ENCODE measurements at regions of chr2 and their contacts with region 1.

Region 1: DNA sequence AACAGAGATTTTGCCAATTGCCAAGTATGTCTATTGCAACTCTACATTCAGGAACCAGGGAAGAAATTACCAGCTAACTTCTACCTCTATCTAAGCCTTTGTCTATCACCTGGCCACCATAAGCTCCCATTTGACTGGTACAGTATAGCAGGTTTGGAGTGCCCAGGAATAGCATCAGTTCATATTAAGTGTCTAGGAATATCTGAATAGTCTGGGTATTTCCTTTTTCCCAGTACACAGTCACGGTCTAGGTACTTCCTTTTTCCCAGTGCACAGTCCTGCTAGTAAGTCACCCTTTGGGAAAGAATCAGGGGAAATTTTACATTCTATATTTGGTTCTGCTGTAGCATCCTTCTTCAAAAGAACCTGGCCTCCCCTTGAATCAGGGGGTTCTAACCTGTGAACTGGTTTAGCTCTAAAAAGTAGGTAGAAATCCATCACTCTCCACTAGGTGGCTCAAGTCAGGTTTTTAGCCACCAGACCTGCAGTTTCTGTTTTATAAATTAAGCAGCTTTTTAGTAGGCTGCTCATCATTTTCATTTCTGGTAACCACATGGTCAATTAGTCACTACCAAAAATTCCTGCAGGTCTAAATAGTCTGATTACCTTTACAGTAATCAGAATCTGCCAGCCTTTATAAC is 49.3 kb upstream of the DNAJC10 start:
- DNase-seq: peak; percentile 73
- H3K4me3 Mint-ChIP-seq: no peak overlapping the region
- H3K27ac Mint-ChIP-seq: no peak overlapping the region
- H3K4me1 Mint-ChIP-seq: peaks cover 3% of the 10 kb centered on the region
- H3K27me3 Mint-ChIP-seq: peaks cover 8% of the 10 kb centered on the region

Region 2: GRCh38 chr2:182682210-182682609 is 15.4 kb after region 1 on chr2:
- intact Hi-C with region 1: no loop called
- DNase-seq: no peak
- H3K4me3 Mint-ChIP-seq: no peak overlapping the region
- H3K27ac Mint-ChIP-seq: no peak overlapping the region
- H3K4me1 Mint-ChIP-seq: no peaks in the 10 kb centered on the region
- H3K27me3 Mint-ChIP-seq: peaks cover 2% of the 10 kb centered on the region

Region 3: GRCh38 chr2:182715896-182716668 is 49.3 kb after region 1 on chr2 and contains the start of gene DNAJC10:
- intact Hi-C with region 1: loop called (anchors 5 kb)
- DNase-seq: peak; percentile 97
- H3K4me3 Mint-ChIP-seq: no peak within 1 kb of the TSS
- H3K27ac Mint-ChIP-seq: no peak within 1 kb of the TSS
- H3K4me1 Mint-ChIP-seq: peaks cover 8% of the 10 kb centered on the region
- H3K27me3 Mint-ChIP-seq: peaks cover 11% of the 10 kb centered on the region
- total RNA-seq, gene DNAJC10: 68.2 and 75.1 TPM in 2 replicates